ENCODE measurements at regions of chr4 and their contacts with region 1.

Region 1: GRCh38 chr4:158253350-158253980 is 43.2 kb downstream of the TMEM144 start:
- DNase-seq: peak; percentile 65
- ATAC-seq: peak; percentile 73
- H3K4me3 Mint-ChIP-seq: no peak overlapping the region
- H3K27ac Mint-ChIP-seq: no peak overlapping the region
- H3K4me1 Mint-ChIP-seq: no peaks in the 10 kb centered on the region
- H3K27me3 Mint-ChIP-seq: peaks cover 6% of the 10 kb centered on the region

Region 2: DNA sequence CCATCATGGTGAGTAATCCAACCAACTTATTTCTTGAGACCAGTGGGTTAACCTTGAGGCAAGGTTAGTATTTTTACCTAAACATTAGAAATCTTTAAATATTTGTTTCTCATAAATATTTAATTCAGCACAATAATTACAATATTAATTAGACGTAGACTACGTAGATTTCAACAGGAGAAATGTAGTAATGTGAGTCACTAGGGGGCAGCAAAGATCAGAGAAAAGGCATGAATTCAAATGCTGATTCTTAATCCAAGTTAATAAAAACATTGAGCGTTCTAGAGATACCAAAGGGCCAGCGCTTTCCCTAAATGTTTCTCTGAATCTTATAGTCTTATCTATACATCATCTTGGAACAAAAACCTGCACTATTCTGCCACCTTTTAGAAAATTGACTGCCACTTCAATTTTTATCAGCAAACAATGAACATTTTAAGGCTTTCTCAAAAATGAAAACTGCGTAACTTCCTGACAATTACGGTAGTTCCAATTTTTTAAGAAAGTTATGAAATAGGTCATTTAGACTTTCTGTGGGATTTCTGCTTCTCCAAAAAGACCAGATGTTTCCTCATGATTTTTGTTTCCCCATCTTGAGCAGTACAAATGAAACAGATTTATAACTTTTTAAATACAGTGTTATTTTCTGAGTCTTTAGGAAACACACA is 261.3 kb before region 1 on chr4:
- CTCF ChIA-PET with region 1: interaction called, 5 read pairs
- POLR2A ChIA-PET with region 1: no interaction called
- intact Hi-C with region 1: loop called (anchors 1 to 2 kb)
- DNase-seq: peak; percentile 26
- ATAC-seq: no peak
- H3K4me3 Mint-ChIP-seq: no peak overlapping the region
- H3K27ac Mint-ChIP-seq: no peak overlapping the region
- H3K4me1 Mint-ChIP-seq: no peaks in the 10 kb centered on the region
- H3K27me3 Mint-ChIP-seq: no peaks in the 10 kb centered on the region

Region 3: GRCh38 chr4:158065176-158065575 is 188.3 kb before region 1 on chr4:
- CTCF ChIA-PET with region 1: no interaction called
- POLR2A ChIA-PET with region 1: no interaction called
- intact Hi-C with region 1: no loop called
- DNase-seq: no peak
- ATAC-seq: no peak
- H3K4me3 Mint-ChIP-seq: no peak overlapping the region
- H3K27ac Mint-ChIP-seq: no peak overlapping the region
- H3K4me1 Mint-ChIP-seq: no peaks in the 10 kb centered on the region
- H3K27me3 Mint-ChIP-seq: no peaks in the 10 kb centered on the region

Region 4: GRCh38 chr4:158155656-158156356 is 97.7 kb before region 1 on chr4:
- CTCF ChIA-PET with region 1: no interaction called
- POLR2A ChIA-PET with region 1: no interaction called
- intact Hi-C with region 1: no loop called
- DNase-seq: no peak
- ATAC-seq: no peak
- H3K4me3 Mint-ChIP-seq: no peak overlapping the region
- H3K27ac Mint-ChIP-seq: no peak overlapping the region
- H3K4me1 Mint-ChIP-seq: no peaks in the 10 kb centered on the region
- H3K27me3 Mint-ChIP-seq: peaks cover 4% of the 10 kb centered on the region

Region 5: GRCh38 chr4:158193171-158193749 is 60.2 kb before region 1 on chr4:
- CTCF ChIA-PET with region 1: interaction called, 17 read pairs
- POLR2A ChIA-PET with region 1: no interaction called
- intact Hi-C with region 1: loop called (anchors 1 to 2 kb)
- DNase-seq: no peak
- ATAC-seq: no peak
- H3K4me3 Mint-ChIP-seq: no peak overlapping the region
- H3K27ac Mint-ChIP-seq: no peak overlapping the region
- H3K4me1 Mint-ChIP-seq: no peaks in the 10 kb centered on the region
- H3K27me3 Mint-ChIP-seq: peaks cover 8% of the 10 kb centered on the region

Region 6: GRCh38 chr4:158213466-158213865 is 40.0 kb before region 1 on chr4:
- CTCF ChIA-PET with region 1: no interaction called
- POLR2A ChIA-PET with region 1: no interaction called
- intact Hi-C with region 1: no loop called
- DNase-seq: no peak
- ATAC-seq: no peak
- H3K4me3 Mint-ChIP-seq: no peak overlapping the region
- H3K27ac Mint-ChIP-seq: no peak overlapping the region
- H3K4me1 Mint-ChIP-seq: peaks cover 21% of the 10 kb centered on the region
- H3K27me3 Mint-ChIP-seq: peaks cover 23% of the 10 kb centered on the region

Region 7: GRCh38 chr4:158397781-158398180 is 144.3 kb after region 1 on chr4:
- CTCF ChIA-PET with region 1: no interaction called
- POLR2A ChIA-PET with region 1: no interaction called
- intact Hi-C with region 1: no loop called
- DNase-seq: no peak
- ATAC-seq: no peak
- H3K4me3 Mint-ChIP-seq: no peak overlapping the region
- H3K27ac Mint-ChIP-seq: no peak overlapping the region
- H3K4me1 Mint-ChIP-seq: no peaks in the 10 kb centered on the region
- H3K27me3 Mint-ChIP-seq: peaks cover 2% of the 10 kb centered on the region

Measured in activated CD4-positive, alpha-beta T cell treated with anti-CD3 and anti-CD28 coated beads for 36 hours (primary cell).